ENCODE measurements at regions of chr4 and their contacts with region 1.

Region 1: DNA sequence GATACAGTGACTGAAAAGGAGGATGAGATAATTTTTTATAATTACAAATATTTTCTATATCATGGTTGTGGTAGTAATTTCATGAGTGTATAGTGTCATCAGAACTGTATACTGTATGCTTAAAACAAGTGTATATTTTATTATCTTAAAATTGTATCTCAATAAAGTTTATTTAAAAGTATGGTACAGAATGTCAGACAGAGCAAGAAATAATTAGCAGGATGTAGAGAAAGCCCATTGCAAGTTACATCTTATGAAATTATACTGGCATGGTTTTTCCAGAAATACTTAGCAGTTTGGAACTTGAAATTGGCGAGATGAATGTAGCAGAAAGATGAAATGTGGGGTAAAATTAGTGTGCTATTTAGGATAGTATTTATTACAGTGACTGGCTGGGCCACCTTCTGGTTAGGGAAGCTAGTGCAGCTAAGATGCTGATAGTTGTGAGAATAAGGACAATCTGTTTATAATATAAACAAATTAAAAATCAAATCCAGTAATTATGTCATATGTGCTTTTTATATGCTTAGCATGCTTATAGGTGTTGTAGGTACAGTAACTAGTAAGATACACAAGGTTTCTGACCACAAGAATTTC is 74.7 kb downstream of the IL15 start:
- DNase-seq: peak in 1 of 3 donors; percentile 40
- ATAC-seq: no peak
- H3K4me3 ChIP-seq: no peak overlapping the region
- H3K27ac ChIP-seq: no peak overlapping the region
- H3K4me1 ChIP-seq: no peaks in the 10 kb centered on the region
- H3K27me3 ChIP-seq: no peaks in the 10 kb centered on the region

Region 2: GRCh38 chr4:141158219-141158618 is 552.9 kb before region 1 on chr4:
- intact Hi-C with region 1: loop called in 1 of 4 experiments (anchors 5 kb)
- DNase-seq: no peak
- ATAC-seq: no peak
- H3K4me3 ChIP-seq: no peak overlapping the region
- H3K27ac ChIP-seq: no peak overlapping the region
- H3K4me1 ChIP-seq: no peaks in the 10 kb centered on the region
- H3K27me3 ChIP-seq: no peaks in the 10 kb centered on the region

Region 3: DNA sequence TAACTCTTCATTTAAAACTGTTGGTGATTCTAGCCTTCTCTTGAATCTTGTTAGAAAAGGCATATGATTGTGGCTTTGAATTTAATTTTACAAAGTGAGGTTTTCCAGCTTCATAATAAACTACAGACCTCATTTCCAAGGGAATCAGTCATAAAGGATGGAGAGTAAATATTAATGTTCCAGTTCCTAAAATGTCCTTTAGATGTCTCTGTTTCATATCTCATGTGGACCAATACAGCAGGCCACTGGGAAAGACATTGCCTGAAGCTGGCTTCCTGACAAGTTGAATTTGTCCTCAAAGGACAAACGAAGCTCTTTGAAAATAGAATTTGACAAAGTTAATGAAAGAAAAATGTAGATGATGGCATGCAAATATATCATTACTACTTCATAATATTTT is 365.0 kb before region 1 on chr4:
- intact Hi-C with region 1: loop called in 2 of 4 experiments (anchors 10 kb)
- DNase-seq: no peak
- ATAC-seq: peak; percentile 80 to 86
- H3K4me3 ChIP-seq: no peak overlapping the region
- H3K27ac ChIP-seq: no peak overlapping the region
- H3K4me1 ChIP-seq: peaks cover 2% of the 10 kb centered on the region
- H3K27me3 ChIP-seq: no peaks in the 10 kb centered on the region

Measured in right cardiac atrium (tissue), 5 donors.